ENCODE measurements at regions of chr21 and their contacts with region 1.

Region 1: GRCh38 chr21:37711836-37712568 is 204.3 kb downstream of the KCNJ6 start:
- DNase-seq: peak in 2 of 3 donors; percentile 63 to 81
- ATAC-seq: peak; percentile 75
- H3K4me3 ChIP-seq: no peak overlapping the region
- H3K4me1 ChIP-seq: no peaks in the 10 kb centered on the region
- CTCF ChIP-seq: peak; percentile 62

Region 2: GRCh38 chr21:38126669-38127303 is 414.8 kb after region 1 on chr21:
- intact Hi-C with region 1: loop called in 1 of 2 experiments (anchors 10 kb)
- DNase-seq: peak in 2 of 3 donors; percentile 43 to 75
- ATAC-seq: peak; percentile 71
- H3K4me3 ChIP-seq: no peak overlapping the region
- H3K4me1 ChIP-seq: no peaks in the 10 kb centered on the region
- CTCF ChIP-seq: peak; percentile 28